ENCODE measurements at regions of chr5 and their contacts with region 1.

Region 1: DNA sequence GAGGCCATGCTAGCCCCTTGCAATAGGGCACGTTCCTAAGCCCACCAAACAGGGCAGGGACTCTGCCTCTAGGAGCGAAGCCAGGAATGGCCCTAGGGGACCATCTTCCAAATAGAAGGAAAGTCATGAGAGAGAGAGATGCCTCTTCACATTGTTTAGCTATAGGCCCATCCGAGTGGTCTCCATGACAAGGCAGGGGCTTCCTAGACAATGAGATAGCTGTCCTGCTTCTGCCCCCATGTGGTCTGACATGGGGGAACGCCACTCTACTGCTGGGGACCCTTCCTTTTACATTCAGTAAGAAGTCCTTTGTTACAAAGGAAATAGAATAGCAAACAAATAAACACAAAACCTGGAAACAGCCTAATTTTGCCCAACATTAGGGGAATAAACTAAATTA is 17.9 kb upstream of the KIF4B start:
- DNase-seq: peak; percentile 46
- ATAC-seq: peak; percentile 100
- H3K4me3 Mint-ChIP-seq: no peak overlapping the region
- H3K27ac Mint-ChIP-seq: no peak overlapping the region
- H3K4me1 Mint-ChIP-seq: no peaks in the 10 kb centered on the region
- H3K27me3 Mint-ChIP-seq: no peaks in the 10 kb centered on the region
- CTCF ChIP-seq: no peak

Region 2: GRCh38 chr5:154937718-154938466 is 57.8 kb before region 1 on chr5 and contains the start of gene GEMIN5:
- CTCF ChIA-PET with region 1: no interaction called
- POLR2A ChIA-PET with region 1: no interaction called
- DNase-seq: peak; percentile 89
- ATAC-seq: peak; percentile 94
- H3K4me3 Mint-ChIP-seq: peak within 1 kb of the TSS; percentile 86
- H3K27ac Mint-ChIP-seq: no peak within 1 kb of the TSS
- H3K4me1 Mint-ChIP-seq: peaks cover 19% of the 10 kb centered on the region
- H3K27me3 Mint-ChIP-seq: peaks cover 2% of the 10 kb centered on the region; the same call in 1 of the 2 replicates
- CTCF ChIP-seq: no peak
- total RNA-seq, gene GEMIN5: 25.9 to 34.8 TPM (median 27.2 TPM) in 3 replicates

Region 3: DNA sequence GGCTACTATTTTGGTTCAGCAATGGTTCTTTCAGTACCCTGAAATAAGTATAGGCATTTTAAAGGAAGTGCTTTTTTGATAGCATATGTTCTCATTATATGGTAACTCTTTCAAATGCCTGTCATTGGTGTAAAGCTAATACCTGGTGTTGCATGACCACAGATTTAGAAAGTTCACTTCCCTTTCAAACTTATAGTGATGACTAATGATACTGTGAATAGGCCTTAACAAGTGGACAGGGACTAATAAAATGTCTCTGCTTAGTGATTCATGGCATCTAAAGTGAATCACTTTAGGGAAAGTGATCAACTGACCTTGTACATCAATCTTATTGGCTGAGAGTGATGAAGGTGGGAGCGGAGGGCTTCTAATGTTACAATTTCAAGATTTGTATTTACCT is 33.2 kb before region 1 on chr5:
- CTCF ChIA-PET with region 1: no interaction called
- POLR2A ChIA-PET with region 1: no interaction called
- DNase-seq: no peak
- ATAC-seq: no peak
- H3K4me3 Mint-ChIP-seq: no peak overlapping the region
- H3K27ac Mint-ChIP-seq: no peak overlapping the region
- H3K4me1 Mint-ChIP-seq: no peaks in the 10 kb centered on the region
- H3K27me3 Mint-ChIP-seq: no peaks in the 10 kb centered on the region
- CTCF ChIP-seq: no peak

Region 4: GRCh38 chr5:154972476-154973080 is 23.1 kb before region 1 on chr5:
- CTCF ChIA-PET with region 1: interaction called, 38 read pairs
- POLR2A ChIA-PET with region 1: no interaction called
- DNase-seq: peak; percentile 32
- ATAC-seq: peak; percentile 75
- H3K4me3 Mint-ChIP-seq: no peak overlapping the region
- H3K27ac Mint-ChIP-seq: no peak overlapping the region
- H3K4me1 Mint-ChIP-seq: no peaks in the 10 kb centered on the region
- H3K27me3 Mint-ChIP-seq: no peaks in the 10 kb centered on the region
- CTCF ChIP-seq: peak; percentile 34; the same call in 1 of the 2 replicates

Region 5: DNA sequence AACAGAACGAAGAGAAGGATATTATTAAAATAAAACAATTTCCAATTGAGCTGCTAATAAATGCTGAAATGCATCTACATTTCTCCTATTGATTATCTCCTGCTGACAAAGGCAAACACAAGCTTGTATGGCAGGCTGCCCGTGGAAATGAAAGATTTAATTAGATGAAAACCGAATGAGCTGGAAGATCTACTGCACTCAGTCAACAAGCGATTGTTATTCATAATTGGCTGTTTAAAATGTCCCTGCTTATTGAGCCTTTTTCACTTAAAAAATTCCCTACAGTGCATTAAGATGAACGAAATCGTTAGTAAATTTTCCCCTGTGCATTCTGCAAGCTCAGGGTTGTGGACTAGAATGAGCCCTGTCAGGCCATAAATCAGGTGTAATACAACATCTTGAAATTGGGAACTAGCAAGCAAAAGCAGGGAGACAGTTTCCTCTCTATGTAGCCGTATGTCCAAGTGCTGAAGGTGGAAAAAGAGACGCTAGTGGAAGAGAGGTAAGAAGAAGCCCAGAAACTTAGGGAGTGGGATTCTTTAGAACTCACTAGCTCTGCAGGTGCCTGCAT is 10.6 kb before region 1 on chr5:
- CTCF ChIA-PET with region 1: interaction called, 10 read pairs
- POLR2A ChIA-PET with region 1: no interaction called
- DNase-seq: no peak
- ATAC-seq: no peak
- H3K4me3 Mint-ChIP-seq: no peak overlapping the region
- H3K27ac Mint-ChIP-seq: no peak overlapping the region
- H3K4me1 Mint-ChIP-seq: peaks cover 8% of the 10 kb centered on the region
- H3K27me3 Mint-ChIP-seq: no peaks in the 10 kb centered on the region
- CTCF ChIP-seq: no peak